ENCODE measurements at regions of chr1 and their contacts with region 1.

Region 1: GRCh38 chr1:204446370-204447111 is 34.9 kb upstream of the PPP1R15B start:
- DNase-seq: peak; percentile 83

Region 2: DNA sequence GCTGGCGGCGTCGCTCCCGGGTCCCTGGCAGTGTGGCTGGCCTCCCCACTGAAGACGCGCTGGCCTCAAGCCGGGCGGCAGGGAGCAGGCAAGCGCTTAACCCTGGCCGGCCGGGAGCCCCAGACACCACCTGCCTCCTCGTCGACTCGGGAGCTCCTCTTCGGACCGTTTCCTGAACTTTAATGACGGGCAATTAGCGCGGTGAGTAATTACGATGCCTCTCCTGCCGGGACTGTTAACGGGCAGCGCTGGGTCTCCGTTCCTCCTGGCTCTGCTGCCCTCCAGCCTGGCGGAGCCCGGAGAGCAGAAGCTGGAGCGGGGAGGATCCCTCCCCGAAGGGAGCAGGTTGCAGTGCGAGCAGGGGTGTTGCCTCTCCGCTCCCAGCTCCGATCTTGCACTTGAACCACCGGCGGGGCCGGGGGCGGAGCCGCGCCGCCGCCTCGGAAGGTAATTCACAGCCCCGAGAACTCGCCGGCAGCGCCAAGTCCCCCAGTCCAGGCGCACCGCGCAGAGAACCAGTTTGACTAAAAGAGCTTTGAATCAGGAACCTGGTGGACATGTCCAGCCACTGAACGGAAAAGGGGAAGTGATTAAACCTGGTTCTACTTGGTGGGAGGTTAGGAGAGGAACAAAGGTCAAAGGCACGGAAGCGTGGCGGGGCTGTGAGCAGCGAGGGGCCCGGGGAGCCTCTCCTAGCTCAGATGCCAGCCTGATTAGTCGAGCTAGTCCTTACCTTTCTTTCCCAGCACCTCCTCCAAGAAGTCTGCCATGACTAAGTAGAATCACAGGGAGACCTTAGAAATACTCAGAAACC is 68.5 kb before region 1 on chr1:
- CTCF ChIA-PET with region 1: interaction called, 10 read pairs
- POLR2A ChIA-PET with region 1: no interaction called
- DNase-seq: peak; percentile 67

Region 3: DNA sequence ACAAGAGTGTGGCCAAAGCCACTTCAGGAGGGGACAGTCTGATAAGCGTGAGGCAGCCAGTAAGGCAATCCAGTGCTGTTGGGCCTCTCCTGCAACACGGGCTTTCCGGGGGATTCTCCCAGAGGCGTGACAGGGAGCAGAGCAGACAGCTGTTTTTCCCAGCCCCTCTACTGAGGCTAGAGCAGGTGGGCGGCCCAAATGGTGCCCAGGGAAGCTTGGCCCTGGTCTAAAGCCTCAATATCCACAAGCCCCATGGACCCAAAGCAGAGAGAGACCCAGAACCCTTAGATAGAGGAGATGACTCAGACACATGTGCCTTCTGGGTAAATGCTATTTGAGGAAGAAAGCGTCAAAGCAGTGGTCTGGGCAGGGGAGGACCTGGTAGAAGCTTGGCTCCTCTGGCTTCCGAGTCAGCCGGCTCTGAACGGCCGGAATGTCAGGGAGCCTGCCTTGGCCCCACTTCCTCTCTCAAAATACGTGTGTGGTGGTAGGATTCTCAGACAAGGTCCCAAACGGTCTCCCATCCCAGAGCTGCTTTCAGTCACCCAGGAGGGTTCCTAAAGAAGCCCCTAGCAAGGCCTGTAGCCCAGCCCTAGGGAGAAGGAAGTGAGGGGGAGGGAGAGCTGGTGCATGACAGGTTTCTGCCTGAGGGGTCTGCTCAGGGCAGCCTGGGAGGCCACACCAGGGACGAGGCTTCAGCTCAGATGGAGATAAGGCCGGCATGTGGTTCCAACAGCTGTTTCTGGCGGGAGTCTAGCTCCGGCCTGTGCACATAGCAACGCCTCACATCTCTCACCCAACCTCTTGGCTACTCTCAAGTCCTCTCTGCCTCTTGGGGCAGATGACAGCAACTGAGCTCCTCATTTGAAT is 19.2 kb after region 1 on chr1:
- CTCF ChIA-PET with region 1: interaction called, 10 read pairs
- POLR2A ChIA-PET with region 1: no interaction called
- DNase-seq: no peak

Region 4: DNA sequence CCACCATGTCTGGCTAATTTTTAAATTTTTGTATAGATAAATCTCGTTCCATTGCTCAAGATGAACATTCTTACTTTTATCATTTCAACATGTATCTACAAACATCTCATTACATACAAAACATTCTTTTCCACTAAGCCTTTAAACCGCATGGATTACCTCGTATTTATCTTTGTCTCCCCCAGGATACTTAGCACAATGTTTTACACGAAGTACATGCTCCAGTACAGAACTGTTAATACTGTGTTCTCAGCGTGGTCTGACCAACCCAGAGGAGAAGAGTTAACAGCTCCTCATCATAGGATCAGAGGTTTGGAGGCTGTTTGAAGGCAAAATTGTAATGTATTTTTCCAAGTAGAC is 40.7 kb after region 1 on chr1:
- CTCF ChIA-PET with region 1: no interaction called
- POLR2A ChIA-PET with region 1: no interaction called
- DNase-seq: no peak

Region 5: GRCh38 chr1:204506961-204507387 is 60.4 kb after region 1 on chr1:
- CTCF ChIA-PET with region 1: interaction called, 51 read pairs
- POLR2A ChIA-PET with region 1: interaction called, 5 read pairs
- DNase-seq: peak; percentile 69